ENCODE measurements at regions of chr4 and their contacts with region 1.

Region 1: GRCh38 chr4:73788411-73788810 is 48.0 kb downstream of the CXCL8 start:
- DNase-seq: no peak
- ATAC-seq: no peak
- H3K4me3 ChIP-seq: no peak overlapping the region
- H3K27ac ChIP-seq: no peak overlapping the region
- H3K4me1 ChIP-seq: peaks cover 6% of the 10 kb centered on the region; the same call in 1 of the 2 replicates
- H3K27me3 ChIP-seq: no peaks in the 10 kb centered on the region
- CTCF ChIP-seq: no peak

Region 2: DNA sequence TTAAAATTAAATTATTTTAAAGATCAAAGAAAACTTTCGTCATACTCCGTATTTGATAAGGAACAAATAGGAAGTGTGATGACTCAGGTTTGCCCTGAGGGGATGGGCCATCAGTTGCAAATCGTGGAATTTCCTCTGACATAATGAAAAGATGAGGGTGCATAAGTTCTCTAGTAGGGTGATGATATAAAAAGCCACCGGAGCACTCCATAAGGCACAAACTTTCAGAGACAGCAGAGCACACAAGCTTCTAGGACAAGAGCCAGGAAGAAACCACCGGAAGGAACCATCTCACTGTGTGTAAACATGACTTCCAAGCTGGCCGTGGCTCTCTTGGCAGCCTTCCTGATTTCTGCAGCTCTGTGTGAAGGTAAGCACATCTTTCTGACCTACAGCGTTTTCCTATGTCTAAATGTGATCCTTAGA is 48.0 kb before region 1 on chr4 and contains the start of gene CXCL8:
- CTCF ChIA-PET with region 1: no interaction called
- POLR2A ChIA-PET with region 1: no interaction called
- intact Hi-C with region 1: loop called (anchors 5 kb)
- DNase-seq: peak; percentile 100
- ATAC-seq: peak; percentile 98
- H3K4me3 ChIP-seq: peak within 1 kb of the TSS; percentile 65
- H3K27ac ChIP-seq: peak within 1 kb of the TSS; percentile 93
- H3K4me1 ChIP-seq: peaks cover 38% of the 10 kb centered on the region
- H3K27me3 ChIP-seq: no peaks in the 10 kb centered on the region
- CTCF ChIP-seq: no peak
- total RNA-seq, gene CXCL8: 360 and 477 TPM in 2 replicates

Region 3: DNA sequence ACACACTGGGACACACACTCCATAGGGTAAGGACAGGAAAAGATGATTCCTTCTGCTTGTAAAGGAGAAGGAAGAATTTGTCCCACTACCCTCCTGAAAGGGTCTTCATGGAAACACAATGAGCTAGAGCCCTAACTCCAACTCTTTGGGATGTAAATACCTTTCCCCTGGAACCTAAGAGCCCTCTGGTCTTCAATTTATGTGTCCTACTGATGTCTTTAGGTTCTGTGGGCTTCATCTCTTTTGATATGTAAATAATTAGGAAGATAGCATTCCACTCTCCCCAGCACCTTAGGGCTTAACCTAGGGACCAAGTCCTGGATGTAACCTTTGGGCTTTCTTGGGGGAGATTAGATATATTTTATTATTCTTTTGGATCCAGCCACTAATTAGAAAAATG is 155.1 kb after region 1 on chr4:
- CTCF ChIA-PET with region 1: no interaction called
- POLR2A ChIA-PET with region 1: no interaction called
- intact Hi-C with region 1: no loop called
- DNase-seq: no peak
- ATAC-seq: no peak
- H3K4me3 ChIP-seq: no peak overlapping the region
- H3K27ac ChIP-seq: no peak overlapping the region
- H3K4me1 ChIP-seq: no peaks in the 10 kb centered on the region
- H3K27me3 ChIP-seq: no peaks in the 10 kb centered on the region
- CTCF ChIP-seq: no peak

Region 4: GRCh38 chr4:74516321-74516720 is 727.9 kb after region 1 on chr4:
- CTCF ChIA-PET with region 1: no interaction called
- POLR2A ChIA-PET with region 1: interaction called, 18 read pairs
- intact Hi-C with region 1: no loop called
- DNase-seq: no peak
- ATAC-seq: no peak; the same call in 1 of the 2 replicates
- H3K4me3 ChIP-seq: no peak overlapping the region
- H3K27ac ChIP-seq: no peak overlapping the region
- H3K4me1 ChIP-seq: no peaks in the 10 kb centered on the region
- H3K27me3 ChIP-seq: no peaks in the 10 kb centered on the region
- CTCF ChIP-seq: no peak

Measured in PC-3 (cell line).